ENCODE measurements at regions of chrX and their contacts with region 1.

Region 1: DNA sequence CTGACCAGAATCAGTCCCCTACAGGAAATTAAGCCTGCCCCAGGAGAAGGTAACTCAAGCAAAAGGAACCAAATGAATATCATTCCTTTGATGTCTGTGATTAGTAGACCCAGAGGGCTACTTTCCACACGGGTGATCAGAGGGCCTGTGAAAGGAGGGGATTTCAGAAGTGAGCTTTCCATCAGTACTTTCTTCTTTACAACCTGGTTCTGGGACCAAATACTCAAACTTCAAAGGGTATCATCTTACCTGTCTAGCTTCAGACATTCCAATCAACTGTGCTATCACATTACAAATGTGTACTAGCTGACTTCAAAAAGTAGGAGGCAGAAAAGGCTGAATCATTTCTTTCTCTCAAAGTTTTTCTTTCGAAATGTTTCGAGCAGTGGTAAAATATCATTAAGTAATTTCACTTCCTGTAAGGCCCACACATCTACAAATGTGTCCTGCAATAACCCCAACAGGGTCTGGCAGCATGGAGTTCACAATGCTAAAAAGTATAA is 23.9 kb downstream of the ACSL4 start:
- DNase-seq: peak in 1 of 4 donors; percentile 32
- ATAC-seq: peak; percentile 31
- H3K4me3 ChIP-seq: no peak overlapping the region
- H3K27ac ChIP-seq: peak overlapping the region in 1 of 2 donors; percentile 53
- H3K4me1 ChIP-seq: peaks cover 0 to 68% of the 10 kb centered on the region in 2 donors
- H3K27me3 ChIP-seq: no peaks in the 10 kb centered on the region
- CTCF ChIP-seq: no peak

Region 2: GRCh38 chrX:109856974-109857373 is 147.8 kb after region 1 on chrX:
- intact Hi-C with region 1: loop called in 1 of 2 experiments (anchors 10 kb)
- DNase-seq: peak in 2 of 4 donors; percentile 4 to 24
- ATAC-seq: peak; percentile 49
- H3K4me3 ChIP-seq: no peak overlapping the region
- H3K27ac ChIP-seq: peak overlapping the region in 1 of 2 donors; percentile 1
- H3K4me1 ChIP-seq: peaks cover 0 to 8% of the 10 kb centered on the region in 2 donors
- H3K27me3 ChIP-seq: peaks cover 0 to 5% of the 10 kb centered on the region in 2 donors
- CTCF ChIP-seq: peak; percentile 57 to 80

Measured in left lung (tissue), 14 donors.